ENCODE measurements at regions of chr11 and their contacts with region 1.

Region 1: DNA sequence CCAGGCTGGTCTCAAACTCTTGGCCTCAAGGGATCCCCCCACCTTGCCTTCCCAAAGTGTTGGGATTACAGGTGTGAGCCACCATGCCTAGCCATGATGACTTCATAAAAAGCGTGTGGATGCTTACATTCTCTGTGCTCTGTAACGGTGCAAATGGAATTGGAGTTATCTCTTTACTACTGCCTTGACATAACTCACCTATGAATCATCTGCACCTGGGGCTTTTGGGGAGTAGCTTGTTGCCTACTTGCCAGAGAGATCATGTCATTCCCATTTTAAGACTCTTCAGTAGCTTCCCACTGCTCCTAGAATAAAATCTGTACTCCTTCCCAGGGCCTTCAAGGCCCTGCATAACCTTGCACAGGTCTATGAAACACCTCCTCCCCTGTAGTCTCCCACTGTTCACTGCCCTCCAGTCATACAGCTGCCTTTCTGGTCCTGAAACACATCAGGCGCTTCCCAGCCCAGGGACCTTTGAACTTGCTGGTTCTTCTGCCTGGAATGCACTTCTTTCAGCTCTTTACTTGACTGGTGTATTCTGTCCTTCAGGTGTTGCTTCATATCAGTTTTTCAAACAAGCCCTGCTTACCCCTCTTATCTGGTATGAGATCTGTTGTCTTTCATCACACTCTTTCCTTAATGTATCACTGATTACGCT is 19.6 kb upstream of the MOGAT2 start:
- DNase-seq: peak; percentile 93 to 96
- H3K4me3 ChIP-seq: no peak overlapping the region
- H3K4me3 Mint-ChIP-seq: peak overlapping the region; percentile 30
- H3K27ac Mint-ChIP-seq: peak overlapping the region; percentile 85
- H3K4me1 ChIP-seq: peaks cover 30% of the 10 kb centered on the region
- H3K4me1 Mint-ChIP-seq: peaks cover 50% of the 10 kb centered on the region
- H3K27me3 ChIP-seq: no peaks in the 10 kb centered on the region
- H3K27me3 Mint-ChIP-seq: no peaks in the 10 kb centered on the region
- CTCF ChIP-seq: no peak

Region 2: GRCh38 chr11:75562048-75562835 is 135.8 kb before region 1 on chr11 and contains the start of gene SERPINH1:
- CTCF ChIA-PET with region 1: no interaction called
- POLR2A ChIA-PET with region 1: interaction called, 10 read pairs
- intact Hi-C with region 1: no loop called
- DNase-seq: peak; percentile 92
- H3K4me3 ChIP-seq: peak within 1 kb of the TSS; percentile 51
- H3K4me3 Mint-ChIP-seq: peak within 1 kb of the TSS; percentile 93
- H3K27ac Mint-ChIP-seq: peak within 1 kb of the TSS; percentile 95
- H3K4me1 ChIP-seq: peaks cover 71% of the 10 kb centered on the region
- H3K4me1 Mint-ChIP-seq: peaks cover 44% of the 10 kb centered on the region
- H3K27me3 ChIP-seq: no peaks in the 10 kb centered on the region
- H3K27me3 Mint-ChIP-seq: no peaks in the 10 kb centered on the region
- CTCF ChIP-seq: no peak
- total RNA-seq, gene SERPINH1: 481 and 528 TPM in 2 replicates

Region 3: GRCh38 chr11:75633409-75634066 is 64.5 kb before region 1 on chr11:
- CTCF ChIA-PET with region 1: interaction called, 3 read pairs
- POLR2A ChIA-PET with region 1: no interaction called
- intact Hi-C with region 1: loop called (anchors 1 kb)
- DNase-seq: peak; percentile 85 to 89
- H3K4me3 ChIP-seq: no peak overlapping the region
- H3K4me3 Mint-ChIP-seq: peak overlapping the region; percentile 50
- H3K27ac Mint-ChIP-seq: peak overlapping the region; percentile 92
- H3K4me1 ChIP-seq: peaks cover 65% of the 10 kb centered on the region
- H3K4me1 Mint-ChIP-seq: peaks cover 43% of the 10 kb centered on the region
- H3K27me3 ChIP-seq: no peaks in the 10 kb centered on the region
- H3K27me3 Mint-ChIP-seq: no peaks in the 10 kb centered on the region
- CTCF ChIP-seq: no peak

Region 4: GRCh38 chr11:75642402-75643113 is 55.5 kb before region 1 on chr11:
- CTCF ChIA-PET with region 1: interaction called, 6 read pairs
- POLR2A ChIA-PET with region 1: no interaction called
- intact Hi-C with region 1: loop called (anchors 1 kb)
- DNase-seq: no peak
- H3K4me3 ChIP-seq: no peak overlapping the region
- H3K4me3 Mint-ChIP-seq: no peak overlapping the region
- H3K27ac Mint-ChIP-seq: no peak overlapping the region
- H3K4me1 ChIP-seq: peaks cover 62% of the 10 kb centered on the region
- H3K4me1 Mint-ChIP-seq: peaks cover 48% of the 10 kb centered on the region
- H3K27me3 ChIP-seq: no peaks in the 10 kb centered on the region
- H3K27me3 Mint-ChIP-seq: no peaks in the 10 kb centered on the region
- CTCF ChIP-seq: no peak

Region 5: GRCh38 chr11:75656044-75656727 is 41.8 kb before region 1 on chr11:
- CTCF ChIA-PET with region 1: no interaction called
- POLR2A ChIA-PET with region 1: no interaction called
- intact Hi-C with region 1: loop called (anchors 1 kb)
- DNase-seq: peak; percentile 82 to 96
- H3K4me3 ChIP-seq: no peak overlapping the region
- H3K4me3 Mint-ChIP-seq: peak overlapping the region; percentile 3
- H3K27ac Mint-ChIP-seq: peak overlapping the region; percentile 6
- H3K4me1 ChIP-seq: peaks cover 89% of the 10 kb centered on the region
- H3K4me1 Mint-ChIP-seq: peaks cover 65% of the 10 kb centered on the region
- H3K27me3 ChIP-seq: no peaks in the 10 kb centered on the region
- H3K27me3 Mint-ChIP-seq: no peaks in the 10 kb centered on the region
- CTCF ChIP-seq: peak; percentile 26 to 36

Region 6: GRCh38 chr11:75667831-75668450 is 30.1 kb before region 1 on chr11:
- CTCF ChIA-PET with region 1: no interaction called
- POLR2A ChIA-PET with region 1: interaction called, 6 read pairs
- intact Hi-C with region 1: loop called (anchors 1 kb)
- DNase-seq: peak; percentile 85 to 90
- H3K4me3 ChIP-seq: peak overlapping the region; percentile 69
- H3K4me3 Mint-ChIP-seq: peak overlapping the region; percentile 82
- H3K27ac Mint-ChIP-seq: peak overlapping the region; percentile 68
- H3K4me1 ChIP-seq: peaks cover 42% of the 10 kb centered on the region
- H3K4me1 Mint-ChIP-seq: peaks cover 33% of the 10 kb centered on the region
- H3K27me3 ChIP-seq: no peaks in the 10 kb centered on the region
- H3K27me3 Mint-ChIP-seq: no peaks in the 10 kb centered on the region
- CTCF ChIP-seq: no peak

Region 7: DNA sequence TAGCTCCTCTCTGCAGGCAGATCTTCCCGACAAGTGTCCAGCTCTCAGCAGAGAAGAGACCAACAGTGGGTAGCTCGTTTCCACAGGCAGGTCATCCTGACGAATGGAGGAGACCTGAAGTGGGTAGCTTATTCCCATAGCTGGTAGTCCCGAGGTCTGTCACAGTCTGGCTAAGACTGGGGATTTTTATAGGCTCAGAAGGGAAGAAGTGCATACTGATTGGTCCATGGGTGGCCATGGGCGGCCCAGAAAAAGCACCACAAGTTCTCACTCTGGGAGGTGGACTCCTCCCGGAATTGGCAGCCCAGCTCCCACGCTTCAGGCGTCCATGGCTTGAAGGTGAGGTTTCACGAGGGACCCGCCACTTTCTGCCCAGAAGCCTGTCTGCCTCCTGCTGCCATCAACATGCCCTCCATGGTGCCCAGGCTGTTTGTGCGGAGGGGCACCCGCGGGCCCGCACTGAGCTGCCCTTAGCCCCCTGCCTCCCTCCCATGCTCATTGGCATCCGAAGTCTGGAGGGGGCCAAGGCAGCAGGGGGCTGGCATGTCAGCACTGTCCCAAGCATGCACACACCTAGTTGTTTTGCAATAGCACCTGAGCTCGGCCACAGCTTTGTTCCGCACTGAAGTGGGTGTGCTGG is 19.3 kb before region 1 on chr11:
- CTCF ChIA-PET with region 1: no interaction called
- POLR2A ChIA-PET with region 1: no interaction called
- intact Hi-C with region 1: no loop called
- DNase-seq: no peak
- H3K4me3 ChIP-seq: no peak overlapping the region
- H3K4me3 Mint-ChIP-seq: no peak overlapping the region
- H3K27ac Mint-ChIP-seq: no peak overlapping the region
- H3K4me1 ChIP-seq: no peaks in the 10 kb centered on the region
- H3K4me1 Mint-ChIP-seq: no peaks in the 10 kb centered on the region
- H3K27me3 ChIP-seq: no peaks in the 10 kb centered on the region
- H3K27me3 Mint-ChIP-seq: no peaks in the 10 kb centered on the region
- CTCF ChIP-seq: no peak

Region 8: DNA sequence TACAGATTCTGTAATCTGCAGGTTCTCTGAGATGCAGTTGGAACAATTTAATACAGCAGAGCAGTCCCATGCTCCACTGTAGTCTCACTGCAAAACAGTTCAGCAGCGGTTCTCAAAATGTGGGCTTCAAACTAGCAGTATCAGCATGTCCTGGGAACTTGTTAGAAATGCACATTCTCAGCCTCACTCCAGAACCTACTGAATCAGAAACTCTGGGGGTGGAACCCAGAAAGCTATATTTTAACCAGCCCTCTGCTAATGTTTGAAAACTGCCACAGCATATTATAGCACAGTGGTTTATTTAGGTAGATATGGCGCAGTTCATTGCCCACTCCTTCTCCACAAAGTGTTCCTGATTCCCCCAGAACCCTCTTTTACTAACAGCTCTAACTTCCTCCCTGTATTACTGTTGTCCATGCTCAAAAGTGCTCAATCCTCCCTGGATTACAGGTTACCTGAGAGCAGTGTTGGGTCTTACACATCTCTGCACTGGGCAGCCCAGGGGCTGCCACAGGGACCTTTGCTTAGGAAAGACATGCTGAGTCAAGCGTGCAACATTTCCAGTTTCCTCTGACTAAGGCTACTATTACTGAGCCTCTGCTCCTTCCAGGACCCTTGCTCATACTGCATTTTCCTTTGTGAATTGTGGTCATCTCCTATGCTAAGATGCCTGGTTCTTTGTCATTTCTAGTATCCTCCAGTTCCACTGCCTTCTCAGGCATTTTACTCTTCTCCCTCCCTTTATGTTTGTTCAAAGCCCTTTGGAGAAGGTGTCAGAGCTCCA is 62.9 kb after region 1 on chr11:
- CTCF ChIA-PET with region 1: interaction called, 5 read pairs
- POLR2A ChIA-PET with region 1: no interaction called
- intact Hi-C with region 1: loop called (anchors 1 kb)
- DNase-seq: no peak
- H3K4me3 ChIP-seq: no peak overlapping the region
- H3K4me3 Mint-ChIP-seq: no peak overlapping the region
- H3K27ac Mint-ChIP-seq: peak overlapping the region; percentile 15
- H3K4me1 ChIP-seq: peaks cover 35% of the 10 kb centered on the region
- H3K4me1 Mint-ChIP-seq: peaks cover 34% of the 10 kb centered on the region
- H3K27me3 ChIP-seq: no peaks in the 10 kb centered on the region
- H3K27me3 Mint-ChIP-seq: no peaks in the 10 kb centered on the region
- CTCF ChIP-seq: no peak